Naive thymus-derived CD4-positive, alpha-beta T cell (primary cell): ENCODE measurements at regions of chr16 and their contacts with region 1.

Region 1: DNA sequence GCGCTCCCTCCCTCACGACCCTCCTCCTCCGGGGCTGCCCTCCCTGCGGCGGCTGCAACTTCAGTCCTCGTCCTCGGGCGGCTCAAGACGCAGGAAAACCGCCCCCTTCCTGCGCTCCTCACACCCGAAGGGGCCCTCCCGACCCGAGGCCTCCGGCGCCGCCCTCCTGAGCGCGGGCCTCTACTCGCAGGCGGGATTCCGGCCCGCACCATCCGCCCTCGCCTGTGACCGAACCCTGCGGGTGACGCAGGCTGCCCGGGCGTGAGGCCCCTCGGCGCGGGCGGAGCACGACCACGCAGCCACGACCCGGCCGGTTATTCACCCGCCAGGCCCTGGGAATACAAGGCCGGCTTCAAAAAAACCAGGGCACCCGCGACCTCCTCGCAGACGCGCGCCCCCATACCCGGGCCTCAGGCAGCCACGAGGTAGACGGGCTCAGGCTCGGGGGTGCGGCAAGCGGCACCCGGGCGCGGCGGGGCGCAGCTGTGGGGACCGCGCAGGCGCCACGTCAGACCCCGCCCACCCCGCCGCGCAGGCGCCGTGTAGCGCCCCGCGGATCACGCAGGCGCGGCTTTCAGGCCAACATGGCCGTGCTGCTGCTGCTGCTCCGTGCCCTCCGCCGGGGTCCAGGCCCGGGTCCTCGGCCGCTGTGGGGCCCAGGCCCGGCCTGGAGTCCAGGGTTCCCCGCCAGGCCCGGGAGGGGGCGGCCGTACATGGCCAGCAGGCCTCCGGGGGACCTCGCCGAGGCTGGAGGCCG is at the start of gene SPG7:
- DNase-seq: peak; percentile 82 to 98 (median 95)
- ATAC-seq: peak; percentile 83
- H3K4me3 ChIP-seq: peak within 1 kb of the TSS; percentile 64
- H3K4me3 Mint-ChIP-seq: peak within 1 kb of the TSS; percentile 82 to 96 (median 95)
- H3K27ac ChIP-seq: peak within 1 kb of the TSS; percentile 86
- H3K27ac Mint-ChIP-seq: peak within 1 kb of the TSS; percentile 87 to 97 (median 94)
- H3K4me1 ChIP-seq: peaks cover 30 to 33% of the 10 kb centered on the region in 2 donors
- H3K4me1 Mint-ChIP-seq: peaks cover 14 to 46% (median 31%) of the 10 kb centered on the region in 7 donors
- H3K27me3 ChIP-seq: no peaks in the 10 kb centered on the region
- H3K27me3 Mint-ChIP-seq: no peaks in the 10 kb centered on the region
- total RNA-seq, gene SPG7: 129 to 181 (median 170) TPM

Region 2: DNA sequence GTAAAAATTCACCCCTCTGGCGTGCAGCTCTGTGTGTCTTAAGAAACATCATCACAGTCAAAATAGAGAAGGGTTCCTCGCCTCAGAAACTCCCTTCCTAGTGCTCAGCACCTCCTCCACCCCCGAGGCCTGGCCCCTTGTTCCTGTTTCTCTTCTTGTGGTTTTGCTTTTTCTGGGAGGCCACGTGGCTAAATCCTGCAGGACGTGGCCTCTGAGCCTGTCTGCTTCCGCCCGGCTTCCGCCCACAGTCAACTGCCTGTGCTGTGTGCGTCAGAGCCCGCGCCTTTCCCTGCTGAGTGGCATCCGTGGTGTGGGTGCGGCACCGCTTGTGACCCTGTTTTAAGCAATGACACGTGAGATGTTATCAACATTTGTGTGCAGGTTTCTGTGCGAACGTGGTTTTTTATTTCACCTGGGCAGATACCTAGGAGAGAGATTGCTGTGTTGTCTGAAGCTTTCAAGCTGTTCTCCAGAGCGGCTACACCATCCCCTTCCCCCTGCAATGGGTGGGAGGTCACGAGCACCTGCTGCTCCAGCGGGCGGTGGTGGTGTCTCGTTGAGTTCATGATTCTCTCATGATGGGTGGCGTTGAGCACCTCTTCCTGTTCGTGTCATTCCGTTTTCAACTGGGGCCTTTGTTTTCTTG is 392.7 kb before region 1 on chr16:
- CTCF ChIA-PET with region 1: no interaction called
- POLR2A ChIA-PET with region 1: no interaction called
- intact Hi-C with region 1: loop called in 1 of 2 experiments (anchors 1 kb)
- DNase-seq: peak; percentile 73 to 98 (median 96)
- ATAC-seq: peak; percentile 95
- H3K4me3 ChIP-seq: peak overlapping the region; percentile 59
- H3K4me3 Mint-ChIP-seq: peak overlapping the region; percentile 81 to 92 (median 87)
- H3K27ac ChIP-seq: peak overlapping the region; percentile 89
- H3K27ac Mint-ChIP-seq: peak overlapping the region in 6 of 9 donors; percentile 95 to 100 (median 96)
- H3K4me1 ChIP-seq: peaks cover 30 to 52% of the 10 kb centered on the region in 2 donors
- H3K4me1 Mint-ChIP-seq: peaks cover 30 to 66% (median 50%) of the 10 kb centered on the region in 7 donors
- H3K27me3 ChIP-seq: no peaks in the 10 kb centered on the region
- H3K27me3 Mint-ChIP-seq: no peaks in the 10 kb centered on the region

Region 3: GRCh38 chr16:89319883-89320781 is 187.9 kb before region 1 on chr16:
- CTCF ChIA-PET with region 1: interaction called, 5 read pairs
- POLR2A ChIA-PET with region 1: interaction called, 34 read pairs
- intact Hi-C with region 1: loop called (anchors 1 to 2 kb)
- DNase-seq: peak in 1 of 9 donors; percentile 59
- ATAC-seq: no peak
- H3K4me3 ChIP-seq: no peak overlapping the region
- H3K4me3 Mint-ChIP-seq: peak overlapping the region in 9 of 10 donors; percentile 36 to 78 (median 48)
- H3K27ac ChIP-seq: no peak overlapping the region
- H3K27ac Mint-ChIP-seq: peak overlapping the region in 7 of 9 donors; percentile 21 to 82 (median 54)
- H3K4me1 ChIP-seq: peaks cover 81 to 94% of the 10 kb centered on the region in 2 donors
- H3K4me1 Mint-ChIP-seq: peaks cover 80 to 97% (median 93%) of the 10 kb centered on the region in 7 donors
- H3K27me3 ChIP-seq: no peaks in the 10 kb centered on the region
- H3K27me3 Mint-ChIP-seq: no peaks in the 10 kb centered on the region

Region 4: DNA sequence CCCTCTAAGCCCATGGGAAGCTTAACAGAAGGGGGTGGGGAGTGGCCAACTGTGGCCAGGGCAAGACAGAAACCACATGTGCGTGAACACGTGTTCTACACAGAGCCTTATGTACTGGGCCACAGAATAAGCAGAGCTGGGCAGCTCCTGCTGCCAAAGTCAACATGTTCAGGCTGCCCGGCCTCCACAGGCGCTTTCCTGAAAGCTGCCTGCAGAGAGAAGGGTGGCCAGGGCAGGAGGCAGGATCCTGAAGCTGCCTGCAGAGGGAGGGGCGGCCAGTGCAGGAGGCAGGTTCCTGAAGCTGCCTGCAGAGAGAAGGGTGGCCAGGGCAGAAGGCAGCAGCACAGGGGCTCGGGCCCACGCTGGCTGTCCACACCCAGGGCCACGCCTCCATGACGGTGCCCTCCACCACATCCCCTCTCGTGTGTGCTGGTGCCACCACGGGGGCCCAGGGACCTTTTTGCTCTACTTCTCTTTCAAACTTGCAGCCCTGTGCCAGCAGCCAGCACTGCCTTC is 97.2 kb before region 1 on chr16:
- CTCF ChIA-PET with region 1: no interaction called
- POLR2A ChIA-PET with region 1: interaction called, 7 read pairs
- intact Hi-C with region 1: loop called in 1 of 2 experiments (anchors 5 kb)
- DNase-seq: peak in 3 of 9 donors; percentile 17 to 34 (median 26)
- ATAC-seq: peak; percentile 28
- H3K4me3 ChIP-seq: no peak overlapping the region
- H3K4me3 Mint-ChIP-seq: peak overlapping the region; percentile 6 to 86 (median 76)
- H3K27ac ChIP-seq: peak overlapping the region; percentile 72
- H3K27ac Mint-ChIP-seq: peak overlapping the region; percentile 89 to 96 (median 93)
- H3K4me1 ChIP-seq: peaks cover 70 to 84% of the 10 kb centered on the region in 2 donors
- H3K4me1 Mint-ChIP-seq: peaks cover 71 to 92% (median 78%) of the 10 kb centered on the region in 7 donors
- H3K27me3 ChIP-seq: no peaks in the 10 kb centered on the region
- H3K27me3 Mint-ChIP-seq: no peaks in the 10 kb centered on the region

Region 5: DNA sequence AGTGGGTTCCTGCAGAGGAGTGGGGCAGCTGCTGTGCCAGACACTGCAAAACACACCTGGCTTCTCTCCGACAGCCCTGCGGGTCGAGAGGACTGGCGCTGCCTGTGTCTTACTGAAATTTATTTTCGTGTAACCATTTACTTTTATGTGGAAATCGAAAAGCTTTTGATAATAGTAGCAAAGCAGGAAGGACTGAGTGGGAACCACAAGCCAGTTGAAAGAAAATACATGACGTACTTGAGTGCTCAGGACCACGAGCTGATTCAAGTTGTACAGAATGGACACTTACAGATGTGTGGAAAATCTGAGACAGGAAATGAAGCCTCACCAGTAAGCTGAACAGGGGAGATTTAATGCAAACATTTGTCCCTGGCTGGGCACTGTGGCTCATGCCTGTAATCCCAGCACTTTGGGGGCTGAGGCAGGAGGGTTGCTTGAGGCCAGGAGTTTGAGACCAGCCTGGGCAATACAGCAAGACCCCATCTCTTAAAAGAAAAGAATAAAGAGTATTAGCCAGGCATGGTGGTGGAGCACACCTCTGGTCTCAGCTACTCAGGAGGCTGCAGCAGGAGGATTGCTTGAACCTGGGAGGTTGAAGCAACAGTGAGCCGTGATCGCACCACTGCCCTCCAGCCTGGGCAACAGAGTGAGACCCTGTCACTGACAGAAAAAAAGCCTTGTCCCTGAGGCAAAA is 41.1 kb after region 1 on chr16:
- CTCF ChIA-PET with region 1: no interaction called
- POLR2A ChIA-PET with region 1: interaction called, 10 read pairs
- intact Hi-C with region 1: no loop called
- DNase-seq: peak in 7 of 9 donors; percentile 50 to 74 (median 63)
- ATAC-seq: peak; percentile 87
- H3K4me3 ChIP-seq: no peak overlapping the region
- H3K4me3 Mint-ChIP-seq: peak overlapping the region; percentile 34 to 79 (median 72)
- H3K27ac ChIP-seq: peak overlapping the region; percentile 54
- H3K27ac Mint-ChIP-seq: peak overlapping the region; percentile 73 to 97 (median 89)
- H3K4me1 ChIP-seq: peaks cover 0 to 19% of the 10 kb centered on the region in 2 donors
- H3K4me1 Mint-ChIP-seq: peaks cover 13 to 31% (median 19%) of the 10 kb centered on the region in 7 donors
- H3K27me3 ChIP-seq: no peaks in the 10 kb centered on the region
- H3K27me3 Mint-ChIP-seq: no peaks in the 10 kb centered on the region